ENCODE measurements at regions of chr4 and their contacts with region 1.

Region 1: GRCh38 chr4:48340965-48341775 is at the start of gene SLAIN2:
- DNase-seq: peak; percentile 86 to 99
- H3K4me3 ChIP-seq: peak within 1 kb of the TSS; percentile 90
- H3K27ac ChIP-seq: peak within 1 kb of the TSS; percentile 82
- H3K4me1 ChIP-seq: peaks cover 58% of the 10 kb centered on the region
- H3K27me3 ChIP-seq: no peaks in the 10 kb centered on the region
- CTCF ChIP-seq: no peak
- total RNA-seq, gene SLAIN2: 31.5 and 70.4 TPM in 2 replicates

Region 2: DNA sequence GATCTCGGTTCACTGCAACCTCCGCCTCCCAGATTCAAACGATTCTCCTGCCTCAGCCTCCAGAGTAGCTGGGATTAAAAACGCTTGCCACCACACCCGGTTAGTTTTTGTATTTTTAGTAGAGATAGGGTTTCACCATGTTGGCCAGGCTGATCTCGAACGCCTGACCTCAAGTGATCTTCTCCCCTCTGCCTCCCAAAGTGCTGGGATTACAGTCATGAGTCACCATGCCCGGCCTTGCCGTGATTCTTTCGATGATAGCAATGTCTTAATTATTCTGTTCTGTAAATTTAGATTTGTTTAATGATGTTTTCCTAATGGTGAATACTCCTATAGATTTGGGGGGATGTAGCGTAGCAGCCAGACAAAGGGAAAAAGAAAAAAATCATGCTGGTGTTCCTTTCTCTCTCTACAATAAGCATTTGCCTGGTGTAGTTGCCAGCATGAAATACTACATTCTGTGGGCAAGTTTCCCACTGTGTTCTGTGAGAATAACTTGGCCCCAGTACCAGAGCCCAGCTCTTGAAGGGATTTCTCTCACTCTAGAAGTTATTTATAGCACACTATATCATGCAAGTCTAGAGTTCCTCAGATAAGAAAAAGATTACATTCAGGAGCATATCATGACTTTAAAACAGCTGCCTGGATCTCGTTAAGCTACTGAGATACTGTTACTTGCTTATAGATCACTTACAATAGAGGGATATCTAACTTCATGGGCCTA is 309.2 kb before region 1 on chr4:
- CTCF ChIA-PET with region 1: no interaction called
- POLR2A ChIA-PET with region 1: interaction called, 11 read pairs
- intact Hi-C with region 1: no loop called
- DNase-seq: no peak
- H3K4me3 ChIP-seq: no peak overlapping the region
- H3K27ac ChIP-seq: peak overlapping the region; percentile 77
- H3K4me1 ChIP-seq: peaks cover 20% of the 10 kb centered on the region
- H3K27me3 ChIP-seq: no peaks in the 10 kb centered on the region
- CTCF ChIP-seq: no peak

Region 3: DNA sequence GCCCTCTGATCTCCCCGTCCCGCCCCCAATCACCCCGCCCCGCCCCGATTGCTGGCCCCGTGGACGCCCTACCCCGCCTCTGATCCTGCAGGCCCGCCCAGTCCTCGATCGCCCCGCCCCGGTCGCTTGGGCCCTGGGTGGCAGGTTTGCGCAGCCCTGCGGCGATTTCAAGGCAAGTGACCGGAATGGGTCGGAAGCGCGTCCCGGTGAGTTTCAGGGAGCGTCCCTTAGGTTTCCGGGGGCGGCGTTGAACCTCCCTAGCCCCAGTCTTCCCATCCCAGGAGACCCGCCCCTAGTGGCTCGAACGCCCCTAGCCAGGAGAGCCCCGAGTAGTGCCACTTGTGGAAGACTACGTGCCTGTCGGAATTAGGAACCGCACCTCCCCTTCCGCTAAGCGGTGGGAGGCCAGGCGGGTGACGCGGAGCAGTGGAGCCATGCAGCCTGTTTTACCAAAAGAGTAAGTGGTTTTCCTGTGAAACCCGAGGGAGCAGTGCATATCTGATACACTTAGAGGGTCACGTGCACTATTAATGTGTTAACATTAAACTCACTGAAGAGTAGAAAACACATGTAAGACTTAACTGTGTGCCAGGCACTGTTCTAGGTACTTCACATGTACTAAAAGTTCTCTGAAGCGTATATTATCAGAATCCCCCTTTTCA is 71.2 kb before region 1 on chr4:
- CTCF ChIA-PET with region 1: no interaction called
- POLR2A ChIA-PET with region 1: no interaction called
- intact Hi-C with region 1: loop called (anchors 5 kb)
- DNase-seq: peak; percentile 85 to 94
- H3K4me3 ChIP-seq: peak overlapping the region; percentile 58
- H3K27ac ChIP-seq: peak overlapping the region; percentile 97
- H3K4me1 ChIP-seq: peaks cover 23% of the 10 kb centered on the region
- H3K27me3 ChIP-seq: no peaks in the 10 kb centered on the region
- CTCF ChIP-seq: peak; percentile 39; the same call in 1 of the 2 replicates

Region 4: DNA sequence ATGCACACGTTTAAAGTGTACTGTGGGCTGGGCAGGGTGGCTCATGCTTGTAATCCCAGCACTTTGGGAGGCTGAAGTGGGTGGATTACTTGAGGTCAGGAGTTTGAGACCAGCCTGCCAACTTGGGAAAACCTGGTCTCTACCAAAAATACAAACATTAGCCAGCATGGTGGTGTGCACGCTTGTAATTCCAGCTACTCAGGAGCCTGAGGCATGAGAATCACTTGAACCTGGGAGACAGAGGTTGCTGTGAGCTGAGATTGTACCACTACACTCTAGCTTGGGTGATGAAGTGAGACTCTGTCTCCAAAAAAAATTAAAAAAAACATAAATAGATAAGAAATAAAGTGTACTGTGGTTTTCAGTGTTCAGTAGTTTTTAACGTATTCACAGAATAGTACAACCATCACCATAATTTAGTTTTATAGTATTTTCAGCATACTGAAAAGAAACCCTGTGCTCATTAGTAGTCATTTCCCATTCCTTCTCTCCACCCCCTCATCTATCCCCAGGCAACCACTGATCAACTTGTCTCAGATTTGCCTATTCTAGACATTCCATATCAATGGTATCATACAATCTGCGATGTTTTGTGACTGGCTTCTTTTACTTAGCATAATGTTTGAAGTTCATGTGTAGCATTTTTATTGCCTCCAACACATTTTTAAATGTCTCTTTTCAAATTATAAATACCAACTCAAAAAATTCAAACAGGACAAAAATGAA is 19.3 kb after region 1 on chr4:
- CTCF ChIA-PET with region 1: no interaction called
- POLR2A ChIA-PET with region 1: interaction called, 11 read pairs
- intact Hi-C with region 1: no loop called
- DNase-seq: no peak
- H3K4me3 ChIP-seq: no peak overlapping the region
- H3K27ac ChIP-seq: no peak overlapping the region
- H3K4me1 ChIP-seq: no peaks in the 10 kb centered on the region
- H3K27me3 ChIP-seq: no peaks in the 10 kb centered on the region
- CTCF ChIP-seq: no peak

Region 5: DNA sequence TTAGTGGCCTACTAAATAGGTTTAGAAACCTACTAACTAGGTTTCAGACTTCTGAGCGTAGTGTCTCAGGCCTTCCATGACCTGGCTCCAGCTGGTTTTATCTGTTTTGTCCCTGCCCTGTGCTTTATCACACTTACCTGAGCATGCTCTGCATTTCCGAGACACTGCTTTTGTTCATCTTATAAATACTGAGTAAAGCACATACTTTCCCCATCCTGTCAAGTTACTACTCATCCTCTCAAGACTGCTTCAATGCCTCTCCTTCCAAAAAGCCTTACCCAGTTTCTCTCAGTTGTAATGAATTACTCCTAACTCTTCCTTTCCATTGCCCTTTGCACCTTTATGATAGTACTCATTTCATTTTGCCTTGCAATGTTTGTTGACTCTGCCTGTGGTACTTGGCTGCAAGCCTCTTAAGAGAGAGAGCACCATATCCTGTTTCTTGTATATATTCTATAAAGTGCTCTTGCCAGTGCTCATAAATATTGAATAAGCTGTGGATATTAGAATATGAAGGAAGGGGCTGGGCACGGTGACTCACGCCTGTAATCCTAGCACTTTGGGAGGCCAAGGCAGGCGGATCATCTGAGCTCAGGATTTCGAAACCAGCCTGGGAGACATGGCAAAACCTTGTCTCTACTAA is 34.6 kb after region 1 on chr4:
- CTCF ChIA-PET with region 1: interaction called, 12 read pairs
- POLR2A ChIA-PET with region 1: interaction called, 4 read pairs
- intact Hi-C with region 1: no loop called
- DNase-seq: peak; percentile 55 to 84
- H3K4me3 ChIP-seq: no peak overlapping the region
- H3K27ac ChIP-seq: peak overlapping the region; percentile 59
- H3K4me1 ChIP-seq: peaks cover 23% of the 10 kb centered on the region
- H3K27me3 ChIP-seq: no peaks in the 10 kb centered on the region
- CTCF ChIP-seq: no peak